ENCODE measurements at regions of chr10 and their contacts with region 1.

Region 1: GRCh38 chr10:77333610-77334340 is 303.8 kb downstream of the KCNMA1 start:
- DNase-seq: peak; percentile 73 to 79
- H3K4me3 ChIP-seq: no peak overlapping the region
- H3K4me3 Mint-ChIP-seq: peak overlapping the region; percentile 58
- H3K27ac Mint-ChIP-seq: peak overlapping the region; percentile 91
- H3K4me1 ChIP-seq: peaks cover 51% of the 10 kb centered on the region
- H3K4me1 Mint-ChIP-seq: peaks cover 57% of the 10 kb centered on the region
- H3K27me3 ChIP-seq: no peaks in the 10 kb centered on the region
- H3K27me3 Mint-ChIP-seq: no peaks in the 10 kb centered on the region
- CTCF ChIP-seq: no peak

Region 2: GRCh38 chr10:77165445-77166208 is 168.1 kb before region 1 on chr10:
- CTCF ChIA-PET with region 1: no interaction called
- POLR2A ChIA-PET with region 1: no interaction called
- intact Hi-C with region 1: loop called (anchors 5 kb)
- DNase-seq: peak; percentile 65 to 76
- H3K4me3 ChIP-seq: no peak overlapping the region
- H3K4me3 Mint-ChIP-seq: peak overlapping the region; percentile 51
- H3K27ac Mint-ChIP-seq: no peak overlapping the region
- H3K4me1 ChIP-seq: peaks cover 3% of the 10 kb centered on the region; the same call in 1 of the 2 replicates
- H3K4me1 Mint-ChIP-seq: peaks cover 26% of the 10 kb centered on the region
- H3K27me3 ChIP-seq: no peaks in the 10 kb centered on the region
- H3K27me3 Mint-ChIP-seq: no peaks in the 10 kb centered on the region
- CTCF ChIP-seq: peak; percentile 74 to 76

Region 3: GRCh38 chr10:77185696-77186095 is 148.1 kb before region 1 on chr10:
- CTCF ChIA-PET with region 1: no interaction called
- POLR2A ChIA-PET with region 1: no interaction called
- intact Hi-C with region 1: loop called (anchors 5 kb)
- DNase-seq: peak; percentile 60 to 67
- H3K4me3 ChIP-seq: no peak overlapping the region
- H3K4me3 Mint-ChIP-seq: peak overlapping the region; percentile 42
- H3K27ac Mint-ChIP-seq: peak overlapping the region; percentile 78
- H3K4me1 ChIP-seq: peaks cover 39% of the 10 kb centered on the region
- H3K4me1 Mint-ChIP-seq: peaks cover 32% of the 10 kb centered on the region
- H3K27me3 ChIP-seq: no peaks in the 10 kb centered on the region
- H3K27me3 Mint-ChIP-seq: no peaks in the 10 kb centered on the region
- CTCF ChIP-seq: peak in 1 of 2 experiments; percentile 39

Region 4: GRCh38 chr10:77240706-77241349 is 92.9 kb before region 1 on chr10:
- CTCF ChIA-PET with region 1: no interaction called
- POLR2A ChIA-PET with region 1: no interaction called
- intact Hi-C with region 1: no loop called
- DNase-seq: no peak
- H3K4me3 ChIP-seq: no peak overlapping the region
- H3K4me3 Mint-ChIP-seq: no peak overlapping the region
- H3K27ac Mint-ChIP-seq: no peak overlapping the region
- H3K4me1 ChIP-seq: peaks cover 7% of the 10 kb centered on the region
- H3K4me1 Mint-ChIP-seq: peaks cover 12% of the 10 kb centered on the region
- H3K27me3 ChIP-seq: no peaks in the 10 kb centered on the region
- H3K27me3 Mint-ChIP-seq: no peaks in the 10 kb centered on the region
- CTCF ChIP-seq: peak in 1 of 2 experiments; percentile 5

Region 5: DNA sequence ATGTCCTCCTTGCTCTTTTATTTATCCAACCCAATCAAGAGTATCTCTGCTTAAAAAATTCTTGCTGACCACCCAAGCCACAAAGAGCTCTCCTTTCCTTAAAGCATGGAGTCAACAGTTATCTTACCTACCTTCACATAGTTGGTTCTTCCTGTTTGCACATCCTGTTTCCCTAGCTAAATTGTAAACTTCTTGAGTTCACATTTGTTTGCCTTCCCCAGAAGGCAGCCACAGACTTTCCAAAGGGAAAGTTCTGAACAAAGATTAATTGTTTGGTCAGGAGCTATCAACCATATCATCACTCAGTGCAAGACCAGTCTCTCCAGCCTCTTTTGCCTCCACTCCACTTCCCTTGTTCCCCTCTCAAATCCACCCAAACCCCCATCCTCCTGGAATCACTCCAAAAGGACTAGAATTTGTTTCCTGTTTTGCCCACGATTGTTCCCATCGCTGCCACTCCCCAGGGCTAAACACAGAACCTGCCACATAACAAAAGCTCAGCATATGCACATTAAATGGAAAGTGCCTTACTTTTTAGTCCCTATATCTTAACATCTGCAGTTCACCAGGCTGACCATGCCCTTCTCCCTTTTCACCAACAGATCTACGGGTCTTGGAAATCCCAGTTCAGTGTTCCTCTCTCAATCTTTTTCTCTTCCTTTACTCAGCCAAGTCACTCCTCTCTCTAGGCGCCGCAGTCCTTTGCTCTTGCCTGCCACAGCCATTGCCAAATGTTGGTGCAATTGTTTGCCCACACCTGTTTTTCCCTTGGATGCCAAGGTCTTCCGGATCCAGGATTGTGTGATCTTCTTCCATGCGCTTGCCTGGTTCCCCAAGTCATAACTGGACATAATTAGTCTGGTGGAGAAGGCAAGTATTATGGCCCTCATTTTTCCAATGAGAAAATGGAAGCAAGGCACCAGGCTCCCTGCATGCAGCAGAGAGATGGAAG is 38.3 kb after region 1 on chr10:
- CTCF ChIA-PET with region 1: no interaction called
- POLR2A ChIA-PET with region 1: no interaction called
- intact Hi-C with region 1: loop called (anchors 5 kb)
- DNase-seq: no peak
- H3K4me3 ChIP-seq: no peak overlapping the region
- H3K4me3 Mint-ChIP-seq: no peak overlapping the region
- H3K27ac Mint-ChIP-seq: no peak overlapping the region
- H3K4me1 ChIP-seq: peaks cover 3% of the 10 kb centered on the region; the same call in 1 of the 2 replicates
- H3K4me1 Mint-ChIP-seq: peaks cover 12% of the 10 kb centered on the region
- H3K27me3 ChIP-seq: no peaks in the 10 kb centered on the region
- H3K27me3 Mint-ChIP-seq: no peaks in the 10 kb centered on the region
- CTCF ChIP-seq: no peak

Region 6: DNA sequence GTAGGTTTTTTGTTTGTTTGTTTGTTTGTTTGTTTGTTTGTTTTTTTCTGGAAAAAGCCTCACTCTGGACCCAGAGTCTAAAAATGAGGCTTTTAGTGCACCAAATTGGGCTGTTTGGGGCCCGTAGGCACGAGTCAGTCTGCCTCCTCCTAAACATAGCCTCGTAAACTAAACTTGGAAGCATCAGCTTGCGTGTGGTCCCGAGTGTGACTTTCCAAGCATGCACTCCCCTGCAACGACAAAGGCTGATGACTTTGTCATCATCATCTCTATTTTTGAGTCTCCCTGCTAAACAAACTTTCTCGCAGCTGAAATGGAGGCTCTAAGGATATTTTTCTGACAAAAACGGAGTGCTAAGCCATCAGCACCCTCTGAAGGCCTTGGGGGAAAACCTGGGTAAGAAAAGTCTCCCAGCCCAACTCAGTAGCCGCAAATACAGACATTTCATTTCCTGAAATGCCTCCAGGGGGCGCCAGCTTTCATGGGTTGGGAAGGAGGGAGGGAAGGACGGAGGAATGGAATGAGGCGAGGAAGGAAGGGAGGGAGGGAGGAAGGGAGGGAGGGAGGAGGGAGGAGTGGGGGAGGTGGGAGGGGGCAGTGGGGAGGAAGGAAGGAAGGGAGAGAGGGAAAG is 57.9 kb after region 1 on chr10:
- CTCF ChIA-PET with region 1: no interaction called
- POLR2A ChIA-PET with region 1: no interaction called
- intact Hi-C with region 1: loop called (anchors 1 kb)
- DNase-seq: peak; percentile 79 to 81
- H3K4me3 ChIP-seq: no peak overlapping the region
- H3K4me3 Mint-ChIP-seq: no peak overlapping the region
- H3K27ac Mint-ChIP-seq: no peak overlapping the region
- H3K4me1 ChIP-seq: peaks cover 50% of the 10 kb centered on the region
- H3K4me1 Mint-ChIP-seq: peaks cover 40% of the 10 kb centered on the region
- H3K27me3 ChIP-seq: no peaks in the 10 kb centered on the region
- H3K27me3 Mint-ChIP-seq: no peaks in the 10 kb centered on the region
- CTCF ChIP-seq: peak; percentile 42 to 65

Region 7: DNA sequence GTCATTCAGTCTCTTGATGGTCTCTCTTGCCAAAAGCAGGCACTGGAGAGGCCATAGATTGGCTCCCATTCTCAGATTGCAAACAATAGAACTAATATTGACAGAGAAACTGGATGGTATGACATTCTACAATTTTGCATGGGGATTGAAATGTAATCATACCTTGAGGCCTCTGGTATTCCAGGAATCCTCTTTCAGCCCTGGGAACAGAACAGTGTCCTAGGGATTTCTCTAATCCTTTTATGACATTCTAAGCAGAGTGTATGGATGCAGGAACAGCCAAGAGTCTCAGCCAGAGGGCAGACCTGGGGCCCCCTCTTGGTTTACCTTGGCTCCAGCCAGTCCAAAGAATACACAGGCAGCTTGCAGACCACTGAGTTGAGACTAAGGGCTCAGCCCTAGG is 97.4 kb after region 1 on chr10:
- CTCF ChIA-PET with region 1: no interaction called
- POLR2A ChIA-PET with region 1: no interaction called
- intact Hi-C with region 1: loop called (anchors 1 kb)
- DNase-seq: peak; percentile 90 to 94
- H3K4me3 ChIP-seq: no peak overlapping the region
- H3K4me3 Mint-ChIP-seq: peak overlapping the region; percentile 47
- H3K27ac Mint-ChIP-seq: peak overlapping the region; percentile 92
- H3K4me1 ChIP-seq: peaks cover 62% of the 10 kb centered on the region
- H3K4me1 Mint-ChIP-seq: peaks cover 66% of the 10 kb centered on the region
- H3K27me3 ChIP-seq: no peaks in the 10 kb centered on the region
- H3K27me3 Mint-ChIP-seq: no peaks in the 10 kb centered on the region
- CTCF ChIP-seq: peak in 1 of 2 experiments; percentile 75